Posterior vena cava (tissue), 2 donors: ENCODE measurements at regions of chr15 and their contacts with region 1.

Region 1: DNA sequence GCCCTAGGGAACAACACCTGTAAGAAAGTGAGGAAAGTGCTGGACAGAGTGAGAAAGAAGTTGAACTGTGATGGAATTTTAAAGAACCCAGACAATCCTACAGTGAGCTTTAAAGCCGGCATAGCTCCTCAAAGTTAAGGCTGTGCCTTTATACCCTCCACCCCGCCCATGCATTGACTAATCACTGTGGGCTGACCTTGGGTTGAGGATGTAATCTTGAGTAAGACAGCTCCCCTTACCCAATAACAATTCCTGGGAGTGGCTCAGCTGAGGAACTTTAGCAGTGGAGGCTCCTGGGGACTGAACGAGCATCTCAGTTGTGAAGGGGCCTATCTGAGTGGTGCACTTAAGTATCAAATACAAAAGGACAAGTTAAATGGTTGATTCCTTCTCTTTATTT is 35.7 kb upstream of the ZNF770 start:
- DNase-seq: no peak

Region 2: GRCh38 chr15:35000511-35000910 is 23.3 kb before region 1 on chr15:
- intact Hi-C with region 1: loop called in 1 of 2 experiments (anchors 1 kb)
- DNase-seq: no peak